ENCODE measurements at regions of chr12 and their contacts with region 1.

Region 1: DNA sequence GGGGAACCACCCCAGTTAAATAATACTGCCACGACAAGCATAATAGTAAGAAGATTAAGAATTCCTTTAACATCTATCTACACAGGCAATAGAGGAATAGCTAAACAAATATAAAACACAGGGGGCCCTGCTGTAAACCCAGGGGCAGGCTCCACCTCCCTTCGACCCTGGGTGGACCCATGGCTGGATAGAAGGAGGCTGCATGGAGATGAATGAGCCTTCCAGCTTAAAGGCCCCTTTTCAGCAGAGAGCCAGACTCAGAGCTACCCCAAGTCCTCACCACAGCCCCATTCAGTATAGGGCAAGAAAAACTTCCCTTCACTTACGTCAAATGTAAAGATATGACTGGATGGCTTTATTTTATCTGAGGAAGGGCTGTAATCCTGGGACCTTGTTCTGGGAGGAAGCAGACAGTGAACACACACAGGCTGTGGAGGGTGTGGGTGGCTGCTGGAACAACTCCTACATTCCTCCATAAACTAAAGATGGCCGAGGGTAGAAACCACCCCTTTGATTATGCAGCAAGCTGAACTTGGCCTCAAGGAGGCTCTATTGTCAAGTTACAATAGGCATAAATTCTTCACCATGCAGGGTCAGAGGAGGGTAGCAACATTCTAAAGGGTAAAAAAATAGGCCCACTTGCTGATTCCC is 30.4 kb downstream of the NUAK1 start:
- DNase-seq: peak in 1 of 2 experiments; percentile 62
- ATAC-seq: peak; percentile 49 to 65; a peak in 5 of 6 replicates
- H3K4me3 ChIP-seq: no peak overlapping the region
- H3K27ac ChIP-seq: peak overlapping the region; percentile 87 to 99
- H3K4me1 ChIP-seq: peaks cover 83% of the 10 kb centered on the region
- CTCF ChIP-seq: no peak
- EP300 ChIP-seq: no peak
- POLR2A ChIP-seq: no peak
- RAD21 ChIP-seq: peak in 1 of 2 experiments; percentile 37; a peak in 2 of 5 replicates

Region 2: GRCh38 chr12:106123551-106124081 is 15.3 kb after region 1 on chr12:
- CTCF ChIA-PET with region 1: interaction called, 33 read pairs
- POLR2A ChIA-PET with region 1: interaction called, 6 read pairs
- DNase-seq: peak in 1 of 2 experiments; percentile 56
- ATAC-seq: peak in 1 of 2 experiments; percentile 4; a peak in 2 of 6 replicates
- H3K4me3 ChIP-seq: no peak overlapping the region
- H3K27ac ChIP-seq: peak overlapping the region; percentile 87 to 99
- H3K4me1 ChIP-seq: peaks cover 96% of the 10 kb centered on the region
- CTCF ChIP-seq: no peak
- EP300 ChIP-seq: no peak
- POLR2A ChIP-seq: no peak
- RAD21 ChIP-seq: no peak